PC-9 (cell line): ENCODE measurements at regions of chr15 and their contacts with region 1.

Region 1: DNA sequence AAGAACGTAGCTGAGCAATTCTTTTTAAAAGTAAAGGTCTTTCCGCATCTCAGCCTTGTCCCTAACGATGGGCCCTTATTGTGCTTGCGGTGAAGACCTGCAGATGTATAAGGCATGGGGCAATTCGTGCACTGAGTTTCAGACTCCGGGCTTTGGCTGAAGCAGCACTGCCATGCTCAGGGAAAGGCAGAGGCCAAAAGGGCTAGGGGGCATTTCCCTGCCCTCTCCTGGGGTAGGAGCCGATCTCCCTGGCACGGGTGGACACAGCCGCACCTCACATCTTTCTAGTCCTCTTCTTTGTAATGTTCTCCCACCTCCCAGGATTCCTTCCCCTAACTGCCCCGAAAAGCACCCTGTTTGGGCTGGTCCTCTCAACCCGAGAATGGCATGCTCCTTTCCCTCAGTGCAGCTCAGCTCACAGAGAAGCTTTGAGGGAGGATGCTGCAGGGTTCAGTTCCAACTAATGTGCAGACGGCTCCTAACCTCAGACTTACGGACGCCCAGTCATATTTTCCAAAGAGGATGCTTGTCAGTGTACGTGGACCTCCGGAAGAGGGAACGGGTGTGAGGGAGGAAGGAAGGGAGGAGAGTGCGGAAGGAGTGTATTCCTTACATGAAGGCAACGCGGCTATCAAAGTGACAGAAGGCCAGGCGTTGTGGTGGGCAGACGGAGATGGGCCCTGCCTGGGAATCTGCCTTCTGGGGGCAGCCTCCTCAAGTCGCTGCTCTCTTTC is 61.2 kb downstream of the SYNM start:
- DNase-seq: no peak
- H3K4me3 ChIP-seq: no peak overlapping the region
- H3K27ac ChIP-seq: no peak overlapping the region
- H3K4me1 ChIP-seq: no peaks in the 10 kb centered on the region
- H3K27me3 ChIP-seq: no peaks in the 10 kb centered on the region
- CTCF ChIP-seq: no peak

Region 2: GRCh38 chr15:99143655-99144610 is 22.2 kb before region 1 on chr15:
- CTCF ChIA-PET with region 1: no interaction called
- POLR2A ChIA-PET with region 1: interaction called, 15 read pairs
- intact Hi-C with region 1: no loop called
- DNase-seq: no peak
- H3K4me3 ChIP-seq: no peak overlapping the region
- H3K27ac ChIP-seq: no peak overlapping the region
- H3K4me1 ChIP-seq: no peaks in the 10 kb centered on the region
- H3K27me3 ChIP-seq: no peaks in the 10 kb centered on the region
- CTCF ChIP-seq: no peak